GM13977 (cell line): ENCODE measurements at regions of chr12 and their contacts with region 1.

Region 1: GRCh38 chr12:25436203-25437030 is 116.7 kb downstream of the LMNTD1 start:
- DNase-seq: peak; percentile 46
- CTCF ChIP-seq: peak; percentile 86

Region 2: GRCh38 chr12:24244801-24245200 is 1191.6 kb before region 1 on chr12:
- in situ Hi-C with region 1: no loop called
- DNase-seq: no peak
- CTCF ChIP-seq: no peak

Region 3: GRCh38 chr12:26028953-26029735 is 592.7 kb after region 1 on chr12:
- in situ Hi-C with region 1: loop called (anchors 10 kb)
- DNase-seq: peak; percentile 38
- CTCF ChIP-seq: peak; percentile 62

Region 4: DNA sequence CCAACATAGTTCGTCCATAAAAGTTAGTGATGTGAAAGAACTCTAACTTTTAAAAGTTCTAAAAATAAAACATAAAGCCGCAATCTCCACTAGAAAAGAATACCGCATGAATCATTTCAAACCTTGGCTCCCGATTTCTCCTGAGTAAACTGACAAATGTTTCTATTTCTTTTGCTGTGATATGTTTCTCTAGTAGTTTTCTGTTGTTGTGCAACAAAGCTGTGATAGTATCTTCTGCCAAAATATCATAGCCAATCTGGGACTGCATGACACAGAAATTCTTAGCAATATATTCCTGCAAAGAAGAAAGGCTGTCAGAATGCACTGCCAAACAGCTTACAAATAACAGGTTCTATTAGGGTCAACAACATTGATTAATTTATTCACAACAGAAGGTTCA is 1222.6 kb after region 1 on chr12:
- in situ Hi-C with region 1: no loop called
- DNase-seq: no peak
- CTCF ChIP-seq: no peak